WTC11 (cell line): ENCODE measurements at regions of chr5 and their contacts with region 1.

Region 1: GRCh38 chr5:157689942-157690689 is 18.8 kb downstream of the C5orf52 start:
- DNase-seq: peak; percentile 45
- ATAC-seq: peak; percentile 83
- H3K4me3 Mint-ChIP-seq: no peak overlapping the region
- H3K27ac Mint-ChIP-seq: no peak overlapping the region
- H3K4me1 Mint-ChIP-seq: no peaks in the 10 kb centered on the region
- H3K27me3 Mint-ChIP-seq: peaks cover 4% of the 10 kb centered on the region
- CTCF ChIP-seq: 0 out of 2 replicates have a peak, but pooled peaks have one; percentile 23

Region 2: DNA sequence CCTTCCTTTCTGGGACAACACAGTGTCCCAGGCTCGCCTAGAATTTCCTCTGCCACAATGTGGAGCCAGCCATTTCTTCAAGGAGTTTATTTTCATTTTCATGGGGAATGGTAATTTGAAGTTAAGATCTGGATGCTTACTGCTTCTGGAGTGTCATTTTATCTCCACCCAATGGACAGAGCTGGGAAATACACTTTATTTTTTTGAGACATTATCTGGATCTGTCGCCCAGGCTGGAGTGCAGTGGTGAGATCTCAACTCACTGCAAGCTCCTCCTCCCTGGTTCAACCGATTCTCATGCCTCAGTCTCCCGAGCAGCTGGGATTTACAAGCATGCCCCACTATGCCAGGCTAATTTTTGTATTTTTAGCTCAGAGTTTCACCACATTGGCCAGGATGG is 28.4 kb after region 1 on chr5:
- CTCF ChIA-PET with region 1: interaction called, 15 read pairs
- POLR2A ChIA-PET with region 1: no interaction called
- DNase-seq: no peak
- ATAC-seq: peak; percentile 74
- H3K4me3 Mint-ChIP-seq: no peak overlapping the region
- H3K27ac Mint-ChIP-seq: peak overlapping the region; percentile 65; the same call in 1 of the 2 replicates
- H3K4me1 Mint-ChIP-seq: peaks cover 7% of the 10 kb centered on the region
- H3K27me3 Mint-ChIP-seq: no peaks in the 10 kb centered on the region
- CTCF ChIP-seq: 0 out of 2 replicates have a peak, but pooled peaks have one; percentile 19

Region 3: DNA sequence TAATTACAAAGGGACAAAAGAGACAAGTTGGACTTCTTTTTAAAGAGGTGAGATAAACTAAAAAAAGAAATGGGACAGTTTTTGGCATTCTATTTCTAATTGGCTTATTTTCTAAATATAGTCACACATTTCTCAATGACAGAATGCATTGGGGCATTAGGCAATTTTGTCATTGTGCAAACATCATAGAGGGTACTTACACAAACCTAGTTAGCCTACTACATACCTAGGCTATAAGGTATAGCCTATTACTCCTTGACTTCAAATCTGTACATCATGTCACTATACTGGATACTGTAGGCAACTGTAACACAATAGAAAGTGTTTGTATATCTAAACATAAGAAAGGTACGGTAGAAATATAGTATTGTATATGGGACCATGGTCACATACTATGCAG is 109.5 kb after region 1 on chr5:
- CTCF ChIA-PET with region 1: no interaction called
- POLR2A ChIA-PET with region 1: no interaction called
- DNase-seq: no peak
- ATAC-seq: no peak
- H3K4me3 Mint-ChIP-seq: no peak overlapping the region
- H3K27ac Mint-ChIP-seq: no peak overlapping the region
- H3K4me1 Mint-ChIP-seq: no peaks in the 10 kb centered on the region
- H3K27me3 Mint-ChIP-seq: no peaks in the 10 kb centered on the region
- CTCF ChIP-seq: no peak